Lower lobe of right lung (tissue), 2 donors: ENCODE measurements at regions of chr6 and their contacts with region 1.

Region 1: GRCh38 chr6:31271641-31272357 is at the start of gene HLA-C:
- DNase-seq: peak; percentile 90
- ATAC-seq: peak; percentile 98
- H3K4me3 ChIP-seq: peak within 1 kb of the TSS; percentile 64
- H3K27ac ChIP-seq: peak within 1 kb of the TSS; percentile 95
- H3K4me1 ChIP-seq: no peaks in the 10 kb centered on the region
- H3K27me3 ChIP-seq: no peaks in the 10 kb centered on the region
- CTCF ChIP-seq: no peak
- total RNA-seq, gene HLA-C: 1,186 TPM

Region 2: DNA sequence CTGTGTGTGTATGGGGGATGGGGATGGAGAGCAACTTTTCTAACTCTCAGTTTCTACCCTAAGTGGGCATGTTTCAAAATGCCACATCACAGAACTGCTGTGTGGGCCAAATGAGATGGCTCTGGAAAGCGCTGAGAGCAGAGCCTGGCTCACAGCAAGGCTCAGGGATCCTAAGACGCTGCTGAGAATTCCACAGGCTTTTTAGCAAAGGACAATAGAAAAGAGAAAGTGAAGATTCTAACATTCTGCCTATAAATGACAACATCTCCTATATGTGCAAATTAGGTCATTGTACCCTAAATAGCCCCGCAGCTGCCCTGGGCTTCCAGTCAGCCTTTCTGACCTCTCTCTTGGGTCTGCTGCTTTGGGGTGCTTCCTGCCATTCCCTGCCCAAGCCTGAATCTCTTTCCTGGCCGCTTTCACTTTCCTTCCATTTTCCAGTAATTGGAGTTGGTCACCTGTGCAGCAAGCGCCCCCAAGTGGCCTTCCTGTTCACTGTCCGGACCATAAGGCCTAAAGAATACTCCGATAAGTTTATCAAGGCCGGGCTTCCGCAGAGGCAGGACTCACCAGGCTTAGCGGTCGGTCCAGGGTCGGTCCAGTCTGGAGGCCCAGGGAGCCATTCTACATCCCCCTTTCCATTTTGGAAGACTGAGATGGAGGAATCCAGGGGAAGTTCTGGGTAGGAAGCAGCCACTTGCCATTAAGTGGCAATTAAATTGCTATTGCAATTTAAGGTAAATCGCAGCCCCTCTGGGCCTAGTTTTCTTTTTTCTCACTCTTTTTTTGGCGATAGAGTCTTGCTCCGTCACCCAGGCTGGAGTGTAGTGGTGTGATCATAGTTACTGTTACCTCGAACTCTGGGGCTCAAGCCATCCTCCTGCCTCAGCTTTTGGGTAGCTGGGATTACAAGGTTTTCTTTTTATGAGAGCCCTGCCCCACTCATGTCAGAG is 394.1 kb before region 1 on chr6:
- intact Hi-C with region 1: no loop called
- DNase-seq: peak; percentile 93
- ATAC-seq: peak; percentile 90
- H3K4me3 ChIP-seq: peak overlapping the region; percentile 44
- H3K27ac ChIP-seq: peak overlapping the region; percentile 72
- H3K4me1 ChIP-seq: peaks cover 20% of the 10 kb centered on the region
- H3K27me3 ChIP-seq: no peaks in the 10 kb centered on the region
- CTCF ChIP-seq: peak; percentile 86

Region 3: DNA sequence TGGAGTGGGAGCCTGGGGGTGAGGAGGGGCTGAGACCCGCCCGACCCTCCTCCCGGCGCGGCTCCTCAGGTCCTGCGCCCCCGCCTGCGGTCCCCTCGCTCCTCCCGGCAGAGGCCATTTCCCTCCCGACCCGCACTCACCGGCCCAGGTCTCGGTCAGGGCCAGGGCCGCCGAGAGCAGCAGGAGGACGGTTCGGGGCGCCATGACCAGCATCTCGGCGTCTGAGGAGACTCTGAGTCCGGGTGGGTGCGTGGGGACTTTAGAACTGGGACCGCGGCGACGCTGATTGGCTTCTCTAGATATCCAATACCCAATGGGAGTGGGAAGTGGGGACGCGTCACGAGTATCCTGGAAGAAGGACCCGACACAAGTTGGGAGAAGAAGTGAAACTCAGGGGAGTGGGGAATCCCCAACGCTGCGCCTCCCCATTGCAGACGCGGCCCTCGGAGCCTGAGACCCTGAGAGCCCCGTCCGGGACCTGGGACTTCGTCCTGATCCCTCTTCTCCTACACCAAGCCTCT is 85.2 kb after region 1 on chr6 and contains the start of gene HLA-B:
- intact Hi-C with region 1: loop called (anchors 10 kb)
- DNase-seq: peak; percentile 81
- ATAC-seq: peak; percentile 96
- H3K4me3 ChIP-seq: peak within 1 kb of the TSS; percentile 68
- H3K27ac ChIP-seq: peak within 1 kb of the TSS; percentile 84
- H3K4me1 ChIP-seq: peaks cover 15% of the 10 kb centered on the region
- H3K27me3 ChIP-seq: no peaks in the 10 kb centered on the region
- CTCF ChIP-seq: no peak
- total RNA-seq, gene HLA-B: 2,736 TPM